Activated CD8-positive, alpha-beta T cell treated with anti-CD3 and anti-CD28 coated beads for 36 hours (primary cell): ENCODE measurements at regions of chr19 and their contacts with region 1.

Region 1: DNA sequence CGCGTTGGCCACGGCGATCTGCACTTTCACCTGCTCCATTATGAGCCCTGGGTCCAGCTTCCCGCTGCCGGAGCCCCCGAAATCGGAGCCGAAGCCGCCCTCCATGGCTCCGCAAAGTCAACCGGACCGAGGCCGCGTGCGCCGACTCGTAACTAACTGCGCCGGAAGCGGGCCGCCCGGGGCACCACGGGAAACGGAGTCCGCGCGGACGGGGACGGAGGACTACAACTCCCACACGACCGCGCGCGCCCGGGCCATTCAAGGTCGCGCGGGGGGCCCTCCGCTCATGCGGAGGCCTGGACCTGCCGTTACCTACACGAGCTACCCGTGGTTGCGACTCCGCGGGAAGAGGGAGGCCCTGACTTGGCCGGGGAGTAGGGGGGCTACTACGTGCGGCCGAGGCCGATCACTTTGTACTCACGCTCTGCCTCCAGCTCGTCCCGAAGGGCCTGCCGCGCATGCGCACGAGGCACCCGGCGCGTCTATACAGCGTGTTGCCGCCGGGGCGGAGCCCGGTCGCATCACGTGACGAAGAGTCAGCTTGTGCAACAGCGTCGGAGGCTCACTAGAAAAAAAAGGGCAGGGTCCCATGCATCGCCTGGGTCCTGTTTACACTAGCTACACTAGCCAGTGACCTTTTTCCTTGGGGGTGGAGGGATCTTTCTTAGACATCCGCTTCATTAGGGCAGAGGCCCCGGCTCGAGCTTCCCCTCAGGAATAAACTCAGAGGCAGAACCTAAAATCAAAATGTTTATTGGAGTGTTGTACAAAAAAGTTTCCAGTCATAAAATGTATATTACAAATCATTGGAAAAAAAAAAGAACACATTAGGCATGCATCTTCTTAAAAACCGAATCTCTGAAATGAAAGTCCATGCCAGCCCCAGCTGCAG is at the start of gene TIMM13:
- DNase-seq: peak; percentile 97
- ATAC-seq: peak; percentile 93
- H3K4me3 Mint-ChIP-seq: peak within 1 kb of the TSS; percentile 82
- H3K27ac Mint-ChIP-seq: peak within 1 kb of the TSS; percentile 94
- H3K4me1 Mint-ChIP-seq: peaks cover 10% of the 10 kb centered on the region
- H3K27me3 Mint-ChIP-seq: no peaks in the 10 kb centered on the region
- CTCF ChIP-seq: no peak
- total RNA-seq, gene TIMM13: 113 to 121 TPM

Region 2: DNA sequence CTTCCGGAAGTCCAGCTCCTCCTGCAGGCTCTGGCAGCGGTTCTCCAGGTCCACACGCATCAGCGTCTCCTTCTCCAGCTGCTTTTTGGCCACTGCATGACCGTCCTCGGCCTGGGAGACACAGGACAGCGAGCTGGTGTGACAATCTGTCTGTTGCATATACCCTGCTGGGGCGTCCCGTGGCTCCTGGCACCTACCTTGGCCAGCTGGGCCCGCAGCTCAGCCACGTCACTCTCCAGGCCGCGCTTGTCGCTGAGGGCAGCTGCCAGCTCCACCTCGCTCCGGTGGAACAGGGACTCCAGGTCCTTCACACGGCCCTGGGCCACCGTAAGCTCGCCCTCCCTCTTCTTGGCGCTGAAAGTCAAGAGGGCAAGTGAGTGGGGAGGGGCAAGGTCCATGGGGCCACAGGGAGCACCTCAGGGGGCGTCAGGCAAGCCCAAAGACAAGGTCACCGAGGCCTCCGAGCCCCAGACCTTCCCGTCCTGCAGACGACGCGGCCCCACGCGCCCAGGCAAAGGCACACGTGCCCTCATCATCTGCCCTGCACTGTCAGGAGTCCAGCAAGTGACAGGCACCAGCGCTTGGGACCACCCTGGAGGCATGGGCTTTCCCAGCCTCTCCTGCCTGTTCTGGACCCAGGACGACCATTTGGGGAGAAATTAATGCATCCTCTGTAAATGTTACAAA is 10.6 kb after region 1 on chr19:
- CTCF ChIA-PET with region 1: no interaction called
- POLR2A ChIA-PET with region 1: interaction called, 31 read pairs
- intact Hi-C with region 1: no loop called
- DNase-seq: no peak
- ATAC-seq: no peak
- H3K4me3 Mint-ChIP-seq: no peak overlapping the region
- H3K27ac Mint-ChIP-seq: no peak overlapping the region
- H3K4me1 Mint-ChIP-seq: no peaks in the 10 kb centered on the region
- H3K27me3 Mint-ChIP-seq: no peaks in the 10 kb centered on the region
- CTCF ChIP-seq: no peak

Region 3: DNA sequence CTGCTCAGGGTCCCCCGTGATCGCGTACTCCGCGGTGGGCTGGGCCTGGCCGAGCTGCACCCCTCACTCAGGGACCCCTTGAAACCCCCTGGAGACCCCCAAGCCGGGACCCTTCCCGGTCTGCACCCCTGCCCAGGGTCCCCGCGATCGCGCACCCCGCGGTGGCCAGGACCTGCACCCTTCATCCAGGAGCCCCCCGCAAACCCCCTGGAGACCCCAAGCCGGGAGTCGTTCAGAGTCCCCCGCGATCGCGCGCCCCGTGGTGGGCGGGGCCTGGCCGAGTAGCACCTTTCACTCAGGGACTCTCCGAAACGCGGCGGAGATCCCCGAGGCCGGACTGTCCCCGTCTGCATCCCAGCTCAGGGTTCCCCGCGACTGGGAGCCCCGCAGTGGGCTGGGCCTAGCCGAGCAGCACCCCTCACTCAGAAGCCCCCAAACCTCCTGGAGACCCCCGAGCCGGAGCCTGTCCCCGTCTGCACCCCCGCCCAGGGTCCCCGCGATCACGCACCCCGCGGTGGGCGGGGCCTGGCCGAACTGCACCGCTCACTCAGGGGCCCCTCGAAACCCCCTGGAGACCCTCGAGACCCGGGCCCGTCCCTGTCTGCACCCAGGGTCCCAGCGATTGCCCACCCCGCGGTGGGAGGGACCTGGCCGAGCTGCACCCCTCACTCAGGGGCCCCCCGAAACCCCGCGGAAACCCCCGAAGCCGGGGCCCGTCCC is 28.3 kb after region 1 on chr19:
- CTCF ChIA-PET with region 1: no interaction called
- POLR2A ChIA-PET with region 1: interaction called, 13 read pairs
- intact Hi-C with region 1: no loop called
- DNase-seq: peak; percentile 69
- ATAC-seq: peak; percentile 50
- H3K4me3 Mint-ChIP-seq: peak overlapping the region; percentile 82
- H3K27ac Mint-ChIP-seq: peak overlapping the region; percentile 91
- H3K4me1 Mint-ChIP-seq: peaks cover 25% of the 10 kb centered on the region
- H3K27me3 Mint-ChIP-seq: no peaks in the 10 kb centered on the region
- CTCF ChIP-seq: no peak

Region 4: GRCh38 chr19:2507109-2507508 is 79.4 kb after region 1 on chr19:
- CTCF ChIA-PET with region 1: no interaction called
- POLR2A ChIA-PET with region 1: no interaction called
- intact Hi-C with region 1: no loop called
- DNase-seq: peak; percentile 50
- ATAC-seq: peak; percentile 22
- H3K4me3 Mint-ChIP-seq: no peak overlapping the region
- H3K27ac Mint-ChIP-seq: peak overlapping the region; percentile 20
- H3K4me1 Mint-ChIP-seq: peaks cover 27% of the 10 kb centered on the region
- H3K27me3 Mint-ChIP-seq: peaks cover 2% of the 10 kb centered on the region
- CTCF ChIP-seq: no peak